Common myeloid progenitor, CD34-positive (primary cell): ENCODE measurements at regions of chr12 and their contacts with region 1.

Region 1: DNA sequence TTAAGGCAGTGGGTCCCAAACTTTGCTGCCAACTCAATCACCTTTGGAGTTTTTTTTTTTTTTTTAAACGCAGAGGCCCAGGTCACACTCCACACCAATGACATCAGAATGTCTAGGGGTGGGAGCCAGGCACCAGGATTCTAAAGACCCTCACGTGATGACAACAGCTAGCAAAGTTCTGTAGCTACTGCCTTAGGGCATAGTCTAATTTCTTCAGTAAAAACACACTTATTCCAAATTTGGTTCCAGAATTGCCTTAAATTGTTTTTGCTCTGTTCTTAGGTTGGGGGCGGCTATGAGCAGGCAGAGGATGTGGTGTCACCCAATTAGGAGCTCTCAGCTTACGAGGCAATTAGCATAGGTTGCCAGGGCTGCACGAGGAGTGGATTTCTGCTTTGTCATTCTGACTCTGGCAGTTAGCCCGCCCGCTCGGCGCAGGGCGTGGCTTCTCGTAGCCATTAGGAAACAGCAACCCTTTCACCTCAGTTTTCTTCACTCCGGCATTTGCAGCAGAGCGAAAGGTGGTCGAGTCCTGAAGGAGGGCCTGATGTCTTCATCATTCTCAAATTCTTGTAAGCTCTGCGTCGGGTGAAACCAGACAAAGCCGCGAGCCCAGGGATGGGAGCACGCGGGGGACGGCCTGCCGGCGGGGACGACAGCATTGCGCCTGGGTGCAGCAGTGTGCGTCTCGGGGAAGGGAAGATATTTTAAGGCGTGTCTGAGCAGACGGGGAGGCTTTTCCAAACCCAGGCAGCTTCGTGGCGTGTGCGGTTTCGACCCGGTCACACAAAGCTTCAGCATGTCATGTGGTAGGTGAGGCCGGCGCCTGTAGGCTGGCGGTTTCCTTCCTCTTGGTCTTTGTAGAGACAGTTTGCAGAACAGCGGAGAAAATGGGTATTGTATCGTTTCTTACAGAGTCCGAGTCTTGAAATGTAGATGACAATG is 16.7 kb upstream of the EID3 start:
- DNase-seq: peak; percentile 97 to 99 (median 99)
- H3K4me3 ChIP-seq: peak overlapping the region; percentile 76 to 95 (median 87)
- H3K27ac ChIP-seq: peak overlapping the region; percentile 96 to 98
- H3K4me1 ChIP-seq: peaks cover 28 to 39% (median 31%) of the 10 kb centered on the region in 4 experiments
- H3K27me3 ChIP-seq: no peaks in the 10 kb centered on the region

Region 2: GRCh38 chr12:104258476-104259067 is 28.2 kb before region 1 on chr12:
- CTCF ChIA-PET with region 1: interaction called, 11 read pairs
- POLR2A ChIA-PET with region 1: no interaction called
- DNase-seq: no peak
- H3K4me3 ChIP-seq: no peak overlapping the region
- H3K27ac ChIP-seq: no peak overlapping the region
- H3K4me1 ChIP-seq: peaks cover 0 to 2% (median under 1%) of the 10 kb centered on the region in 4 experiments
- H3K27me3 ChIP-seq: no peaks in the 10 kb centered on the region

Region 3: GRCh38 chr12:104303538-104304151 is 16.8 kb after region 1 on chr12 and contains the start of gene EID3:
- CTCF ChIA-PET with region 1: interaction called, 16 read pairs
- POLR2A ChIA-PET with region 1: interaction called, 10 read pairs
- DNase-seq: peak; percentile 74 to 87 (median 84)
- H3K4me3 ChIP-seq: peak within 1 kb of the TSS; percentile 37 to 77 (median 56)
- H3K27ac ChIP-seq: no peak within 1 kb of the TSS
- H3K4me1 ChIP-seq: peaks cover 5 to 17% (median 15%) of the 10 kb centered on the region in 4 experiments
- H3K27me3 ChIP-seq: no peaks in the 10 kb centered on the region

Region 4: DNA sequence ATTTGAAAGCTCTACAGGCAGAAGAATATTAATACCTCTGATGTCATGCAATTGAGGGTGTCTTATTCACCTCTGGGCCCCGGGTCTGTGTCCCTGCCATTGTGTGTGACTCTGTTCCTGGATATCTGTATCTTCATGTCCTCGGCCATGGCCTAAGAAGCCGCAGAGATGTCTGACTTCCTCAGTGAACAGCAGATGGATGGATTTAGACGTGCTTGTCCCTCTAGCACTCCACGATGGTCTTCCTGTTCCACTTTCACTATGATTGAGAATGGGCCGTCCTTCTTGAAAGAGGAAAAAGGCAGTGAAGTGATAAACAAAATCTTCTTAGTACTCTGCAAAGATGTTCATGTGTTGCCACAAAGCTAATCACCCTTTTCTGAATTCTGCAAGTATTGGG is 453.9 kb after region 1 on chr12:
- CTCF ChIA-PET with region 1: no interaction called
- POLR2A ChIA-PET with region 1: no interaction called
- DNase-seq: peak; percentile 52 to 88 (median 78)
- H3K4me3 ChIP-seq: peak overlapping the region in 3 of 7 experiments; percentile 24 to 64 (median 26)
- H3K27ac ChIP-seq: peak overlapping the region; percentile 27 to 73
- H3K4me1 ChIP-seq: peaks cover 2 to 69% (median 56%) of the 10 kb centered on the region in 4 experiments
- H3K27me3 ChIP-seq: no peaks in the 10 kb centered on the region